ENCODE measurements at regions of chr17 and their contacts with region 1.

Region 1: DNA sequence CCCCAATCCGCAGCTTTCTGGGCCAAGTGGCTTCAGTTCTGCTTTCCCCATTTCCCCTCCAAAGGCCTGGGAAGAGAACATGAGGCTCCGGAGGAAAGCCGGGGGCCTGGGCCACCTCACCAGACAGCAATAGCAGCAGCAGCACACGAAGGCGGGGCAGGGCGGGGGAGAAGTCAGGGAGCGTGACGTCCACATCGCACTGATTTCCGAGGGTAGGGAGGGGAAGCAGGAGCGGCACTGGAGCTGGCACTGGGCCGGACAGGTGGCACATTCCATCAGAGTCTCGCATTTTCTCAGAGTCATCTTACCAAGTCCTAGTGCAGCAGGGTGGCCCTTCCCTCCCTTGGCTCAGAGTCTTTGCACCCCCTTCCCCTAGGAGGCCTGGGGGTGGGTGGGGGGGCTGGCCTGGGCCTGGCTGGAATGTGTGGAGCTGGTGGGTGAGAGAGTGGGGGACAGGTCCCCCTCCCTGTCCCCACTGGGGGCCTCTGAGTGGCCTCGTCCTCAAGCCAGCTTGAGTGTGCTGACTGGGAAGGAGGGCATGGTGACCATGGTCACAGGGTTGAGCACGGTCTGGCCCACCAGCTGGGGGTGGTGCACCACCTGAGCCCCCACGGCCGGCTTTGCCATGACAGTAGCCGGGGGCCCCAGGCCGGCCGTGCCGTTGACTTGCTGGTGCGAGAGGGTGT is 14.3 kb downstream of the MNT start:
- DNase-seq: no peak
- H3K4me3 ChIP-seq: no peak overlapping the region
- H3K27ac ChIP-seq: no peak overlapping the region
- H3K27me3 ChIP-seq: no peaks in the 10 kb centered on the region
- CTCF ChIP-seq: no peak

Region 2: GRCh38 chr17:2336215-2336851 is 50.2 kb before region 1 on chr17 and contains the start of gene TSR1:
- CTCF ChIA-PET with region 1: interaction called, 14 read pairs
- POLR2A ChIA-PET with region 1: interaction called, 4 read pairs
- DNase-seq: peak; percentile 68
- H3K4me3 ChIP-seq: peak within 1 kb of the TSS; percentile 95
- H3K27ac ChIP-seq: peak within 1 kb of the TSS; percentile 31
- H3K27me3 ChIP-seq: no peaks in the 10 kb centered on the region
- CTCF ChIP-seq: peak; percentile 36
- polyA plus RNA-seq, gene TSR1: 15.1 and 15.5 TPM in 2 replicates

Region 3: DNA sequence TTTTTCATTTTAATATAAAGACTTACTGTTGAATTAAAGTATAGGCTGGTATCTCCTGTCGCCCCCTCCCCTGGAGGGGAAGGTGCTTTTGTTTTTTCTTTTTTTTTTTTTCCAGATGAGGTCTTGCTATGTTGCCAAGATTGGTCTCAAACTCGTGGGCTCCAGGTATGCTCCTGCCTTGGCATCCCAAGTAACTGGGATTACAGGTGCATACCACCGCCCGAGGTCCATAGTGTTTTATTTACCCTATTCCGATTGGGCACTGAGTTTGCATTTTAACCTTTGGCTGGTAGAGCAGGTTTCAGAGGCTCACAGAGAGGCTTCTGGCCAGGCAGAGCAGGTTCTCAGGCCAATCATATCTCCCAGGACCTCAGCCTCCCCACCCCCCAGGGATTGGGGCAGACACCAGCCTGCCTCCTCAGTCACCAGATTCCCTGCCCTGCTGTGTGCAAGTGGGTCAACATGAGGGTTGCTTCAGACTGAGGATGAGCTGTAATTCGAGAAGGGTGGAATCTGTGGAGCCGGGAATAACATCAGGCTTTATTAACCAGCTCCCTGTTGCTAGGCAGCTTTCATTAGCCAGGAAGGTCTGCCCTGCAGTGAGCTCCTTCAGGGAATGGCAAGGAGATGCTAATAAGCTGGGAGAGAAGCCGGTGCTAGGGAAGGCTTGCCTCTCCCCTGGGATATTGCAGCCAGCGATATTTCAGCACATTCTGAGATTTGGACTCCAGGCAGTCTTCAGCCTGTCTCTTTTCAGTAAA is 38.8 kb before region 1 on chr17:
- CTCF ChIA-PET with region 1: interaction called, 11 read pairs
- POLR2A ChIA-PET with region 1: no interaction called
- DNase-seq: peak; percentile 72
- H3K4me3 ChIP-seq: no peak overlapping the region
- H3K27ac ChIP-seq: peak overlapping the region; percentile 43
- H3K27me3 ChIP-seq: no peaks in the 10 kb centered on the region
- CTCF ChIP-seq: no peak

Region 4: DNA sequence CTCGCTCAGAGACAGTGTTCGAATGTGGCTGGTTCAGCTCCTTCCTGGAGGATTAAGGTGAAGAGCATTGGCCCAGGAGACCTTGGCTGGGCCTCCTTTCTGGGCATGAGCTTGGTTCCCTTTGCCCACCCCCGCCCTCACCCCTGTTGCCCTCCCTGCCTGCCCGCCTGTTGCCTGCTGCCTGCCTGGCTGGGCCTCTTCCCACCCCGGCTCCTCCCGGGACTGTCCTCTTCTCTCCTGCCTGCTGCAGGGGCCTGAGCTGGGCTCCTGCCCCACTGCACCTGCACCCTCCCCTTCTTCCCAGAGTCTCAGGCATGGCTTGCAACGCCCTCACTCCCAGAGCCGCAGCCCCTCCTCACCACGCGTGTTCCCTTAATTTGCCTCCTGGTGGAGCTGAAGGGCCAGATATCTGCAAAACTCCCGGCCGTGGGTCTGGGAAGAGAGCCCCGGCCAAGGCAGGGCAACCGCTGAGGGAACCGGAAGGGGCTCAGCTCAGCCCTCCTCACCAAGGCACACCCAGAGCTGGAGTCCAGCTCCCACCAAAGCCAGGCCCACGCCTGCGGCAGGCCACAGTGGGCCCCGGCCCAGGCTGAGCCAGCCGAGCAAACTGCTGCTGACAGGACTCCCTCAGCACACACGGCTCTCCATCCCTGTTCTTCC is 16.9 kb before region 1 on chr17:
- CTCF ChIA-PET with region 1: interaction called, 13 read pairs
- POLR2A ChIA-PET with region 1: interaction called, 4 read pairs
- DNase-seq: no peak
- H3K4me3 ChIP-seq: no peak overlapping the region
- H3K27ac ChIP-seq: no peak overlapping the region
- H3K27me3 ChIP-seq: no peaks in the 10 kb centered on the region
- CTCF ChIP-seq: 0 out of 2 replicates have a peak, but pooled peaks have one; percentile 15

Region 5: GRCh38 chr17:2406903-2407790 is 20.6 kb after region 1 on chr17:
- CTCF ChIA-PET with region 1: interaction called, 320 read pairs
- POLR2A ChIA-PET with region 1: interaction called, 23 read pairs
- DNase-seq: no peak
- H3K4me3 ChIP-seq: no peak overlapping the region
- H3K27ac ChIP-seq: peak overlapping the region; percentile 95
- H3K27me3 ChIP-seq: no peaks in the 10 kb centered on the region
- CTCF ChIP-seq: no peak

Measured in AG04450 (cell line).